Activated CD8-positive, alpha-beta T cell treated with anti-CD3 and anti-CD28 coated beads for 36 hours (primary cell): ENCODE measurements at regions of chr6 and their contacts with region 1.

Region 1: DNA sequence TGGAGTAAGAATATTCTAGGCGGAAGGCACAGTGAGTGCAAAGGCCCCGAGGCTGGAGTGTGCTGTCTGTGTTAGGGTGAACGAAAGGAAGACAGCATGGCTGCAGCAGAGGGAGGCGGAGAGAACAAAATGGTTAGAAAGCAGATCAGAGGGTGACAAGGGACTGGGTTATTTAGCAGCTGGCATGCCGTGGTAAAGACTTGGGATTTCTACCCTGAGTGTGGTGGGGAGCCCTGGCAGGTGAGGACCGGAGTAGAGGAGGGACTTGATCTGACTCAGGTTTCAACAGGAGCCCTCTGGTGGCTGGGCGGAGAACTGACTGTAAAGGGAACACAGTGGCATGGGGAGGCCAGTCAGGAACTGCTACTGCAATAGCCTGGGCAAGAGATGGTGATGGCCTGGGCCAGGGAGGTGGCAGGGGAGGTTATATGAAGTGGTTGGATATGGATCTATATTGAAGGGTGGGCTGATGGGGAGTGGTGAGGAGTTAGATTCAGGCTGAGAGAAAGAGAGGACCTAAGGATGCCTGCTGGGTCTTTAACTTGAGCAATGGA is 38.0 kb downstream of the PIM1 start:
- DNase-seq: peak; percentile 97
- ATAC-seq: peak; percentile 76
- H3K4me3 Mint-ChIP-seq: no peak overlapping the region
- H3K27ac Mint-ChIP-seq: peak overlapping the region; percentile 86
- H3K4me1 Mint-ChIP-seq: peaks cover 65% of the 10 kb centered on the region
- H3K27me3 Mint-ChIP-seq: no peaks in the 10 kb centered on the region
- CTCF ChIP-seq: peak; percentile 93

Region 2: DNA sequence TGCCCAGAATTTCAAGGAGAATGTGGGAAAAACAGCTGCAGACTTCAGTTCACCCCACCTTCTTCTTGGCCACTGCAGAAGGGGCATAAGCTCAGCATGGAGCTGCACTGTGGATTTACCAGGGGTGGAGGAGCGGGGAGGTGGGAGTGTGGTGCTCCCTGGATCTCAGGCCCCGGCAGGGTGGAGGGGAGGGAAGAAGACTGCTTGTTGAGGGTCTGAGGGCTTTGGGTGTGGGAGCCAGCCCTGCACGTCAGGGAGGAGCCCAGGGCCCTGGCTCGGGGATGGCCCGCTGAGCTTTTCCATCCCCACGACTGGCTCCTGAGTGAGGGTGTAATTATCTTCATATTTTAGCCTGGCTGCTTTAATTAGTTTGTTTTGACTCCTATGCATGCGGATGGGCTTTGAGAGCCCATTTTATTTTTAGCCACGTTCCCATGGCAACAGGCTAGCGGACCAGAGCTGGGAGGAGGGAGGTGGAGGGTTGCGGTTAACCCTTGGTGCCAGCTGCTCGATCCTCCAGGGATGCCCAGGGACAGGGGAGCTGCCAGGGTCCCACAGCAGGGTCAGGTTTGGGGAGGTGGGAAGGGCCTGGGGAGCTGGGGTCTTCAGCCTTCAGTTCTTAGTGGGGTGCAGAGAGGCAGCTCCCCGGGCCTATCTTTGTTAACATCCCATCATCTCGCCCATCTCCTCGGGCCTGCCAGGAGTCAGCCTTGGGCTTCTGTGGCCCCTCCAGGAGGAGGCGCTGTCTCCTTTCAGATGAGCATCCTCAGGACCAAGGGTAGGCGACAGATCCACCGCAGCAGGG is 442.2 kb before region 1 on chr6:
- CTCF ChIA-PET with region 1: interaction called, 5 read pairs
- POLR2A ChIA-PET with region 1: no interaction called
- intact Hi-C with region 1: loop called (anchors 10 kb)
- DNase-seq: peak; percentile 90
- ATAC-seq: peak; percentile 88
- H3K4me3 Mint-ChIP-seq: no peak overlapping the region
- H3K27ac Mint-ChIP-seq: no peak overlapping the region
- H3K4me1 Mint-ChIP-seq: peaks cover 31% of the 10 kb centered on the region
- H3K27me3 Mint-ChIP-seq: no peaks in the 10 kb centered on the region
- CTCF ChIP-seq: peak; percentile 87

Region 3: DNA sequence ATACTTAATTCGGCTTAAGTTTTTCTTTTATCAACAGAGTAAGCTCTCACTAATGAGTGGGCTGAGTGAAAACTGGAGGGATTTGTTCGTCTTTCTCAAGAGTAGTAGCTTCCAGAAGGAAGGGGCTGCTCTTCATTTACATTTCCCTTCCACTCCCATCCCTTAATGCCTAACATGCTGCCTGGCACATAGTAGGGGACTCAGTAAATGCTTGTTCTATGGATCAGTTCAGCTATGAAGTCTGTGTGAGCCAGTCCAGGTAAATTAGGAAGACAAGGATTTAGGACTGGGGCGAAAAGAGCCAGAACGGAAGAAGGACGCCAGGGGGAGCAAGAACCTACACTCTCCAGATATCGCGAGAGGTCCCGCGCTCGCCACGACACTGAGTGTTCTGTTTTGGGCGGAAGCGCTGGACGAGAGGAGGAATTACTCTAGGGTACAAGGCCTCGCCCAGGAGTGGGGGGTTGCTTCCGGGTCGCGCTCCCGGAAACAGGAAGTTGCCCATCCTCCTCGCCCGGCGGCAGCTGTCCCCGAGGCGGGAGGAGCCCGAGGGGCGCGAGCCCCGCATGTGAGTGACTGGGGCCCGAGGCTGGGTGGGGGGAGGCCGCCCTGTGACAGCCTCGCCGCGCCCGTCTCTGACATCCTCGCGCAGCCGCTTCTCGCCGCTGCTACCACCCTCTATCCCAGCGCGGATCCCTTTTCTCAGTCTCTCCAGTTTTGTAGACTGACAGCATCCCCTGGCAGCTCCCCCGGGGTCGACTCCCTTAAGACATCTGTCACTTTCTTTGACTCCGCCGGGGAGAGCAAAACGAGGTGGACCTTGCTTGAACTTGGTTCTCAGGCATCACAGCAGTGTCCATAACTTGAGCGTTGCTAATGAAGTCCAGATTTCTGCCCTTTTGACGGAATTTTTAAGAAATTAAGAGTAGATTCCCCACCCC is 322.2 kb before region 1 on chr6 and contains the start of gene C6orf89:
- CTCF ChIA-PET with region 1: interaction called, 9 read pairs
- POLR2A ChIA-PET with region 1: no interaction called
- intact Hi-C with region 1: loop called (anchors 10 kb)
- DNase-seq: peak; percentile 99
- ATAC-seq: peak; percentile 99
- H3K4me3 Mint-ChIP-seq: peak within 1 kb of the TSS; percentile 94
- H3K27ac Mint-ChIP-seq: peak within 1 kb of the TSS; percentile 96
- H3K4me1 Mint-ChIP-seq: peaks cover 35% of the 10 kb centered on the region
- H3K27me3 Mint-ChIP-seq: no peaks in the 10 kb centered on the region
- CTCF ChIP-seq: peak; percentile 79
- total RNA-seq, gene C6orf89: 24.7 to 29.8 TPM

Region 4: DNA sequence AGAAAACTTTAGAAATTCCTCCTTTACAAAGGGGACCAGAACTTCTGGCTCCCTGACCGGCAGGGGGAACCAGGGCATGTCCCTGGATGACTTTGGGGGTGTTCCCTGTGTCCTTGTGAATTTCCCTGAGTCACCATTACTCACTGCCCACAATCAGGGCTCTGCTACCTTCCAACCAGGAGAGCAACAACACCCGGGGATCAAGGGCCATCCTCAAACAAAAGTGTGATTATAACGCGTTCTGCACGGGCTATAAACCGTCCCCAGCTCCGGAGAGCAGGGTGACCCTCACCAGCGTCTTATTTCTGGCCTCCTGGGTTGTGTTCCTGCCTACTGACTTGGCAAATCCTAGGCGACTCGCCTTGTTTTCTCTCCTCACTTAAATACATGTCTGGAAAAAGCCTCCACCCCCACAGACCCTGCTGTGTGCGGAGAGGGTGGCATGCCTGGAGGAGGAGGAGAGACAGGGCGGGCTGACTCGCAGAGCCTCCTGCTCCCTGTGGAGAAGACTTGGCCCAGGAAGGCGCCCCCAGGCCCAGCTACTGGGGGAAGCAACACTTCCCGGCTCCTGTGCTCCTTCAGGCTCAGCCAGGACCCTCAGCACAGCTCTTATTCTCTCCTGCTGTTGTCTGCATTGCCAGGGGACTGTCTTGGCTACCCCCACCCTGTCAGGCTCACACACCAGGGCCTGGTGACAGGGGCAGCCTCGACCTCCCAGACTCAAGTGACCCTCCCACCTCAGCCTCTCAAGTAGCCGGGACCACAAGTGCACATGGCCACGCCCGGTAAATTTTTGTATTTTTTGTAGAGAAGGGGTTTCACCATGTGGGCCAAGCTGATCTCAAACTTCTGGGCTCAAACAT is 148.4 kb before region 1 on chr6:
- CTCF ChIA-PET with region 1: interaction called, 97 read pairs
- POLR2A ChIA-PET with region 1: no interaction called
- intact Hi-C with region 1: no loop called
- DNase-seq: peak; percentile 31
- ATAC-seq: peak; percentile 55
- H3K4me3 Mint-ChIP-seq: no peak overlapping the region
- H3K27ac Mint-ChIP-seq: no peak overlapping the region
- H3K4me1 Mint-ChIP-seq: peaks cover 7% of the 10 kb centered on the region
- H3K27me3 Mint-ChIP-seq: no peaks in the 10 kb centered on the region
- CTCF ChIP-seq: no peak

Region 5: DNA sequence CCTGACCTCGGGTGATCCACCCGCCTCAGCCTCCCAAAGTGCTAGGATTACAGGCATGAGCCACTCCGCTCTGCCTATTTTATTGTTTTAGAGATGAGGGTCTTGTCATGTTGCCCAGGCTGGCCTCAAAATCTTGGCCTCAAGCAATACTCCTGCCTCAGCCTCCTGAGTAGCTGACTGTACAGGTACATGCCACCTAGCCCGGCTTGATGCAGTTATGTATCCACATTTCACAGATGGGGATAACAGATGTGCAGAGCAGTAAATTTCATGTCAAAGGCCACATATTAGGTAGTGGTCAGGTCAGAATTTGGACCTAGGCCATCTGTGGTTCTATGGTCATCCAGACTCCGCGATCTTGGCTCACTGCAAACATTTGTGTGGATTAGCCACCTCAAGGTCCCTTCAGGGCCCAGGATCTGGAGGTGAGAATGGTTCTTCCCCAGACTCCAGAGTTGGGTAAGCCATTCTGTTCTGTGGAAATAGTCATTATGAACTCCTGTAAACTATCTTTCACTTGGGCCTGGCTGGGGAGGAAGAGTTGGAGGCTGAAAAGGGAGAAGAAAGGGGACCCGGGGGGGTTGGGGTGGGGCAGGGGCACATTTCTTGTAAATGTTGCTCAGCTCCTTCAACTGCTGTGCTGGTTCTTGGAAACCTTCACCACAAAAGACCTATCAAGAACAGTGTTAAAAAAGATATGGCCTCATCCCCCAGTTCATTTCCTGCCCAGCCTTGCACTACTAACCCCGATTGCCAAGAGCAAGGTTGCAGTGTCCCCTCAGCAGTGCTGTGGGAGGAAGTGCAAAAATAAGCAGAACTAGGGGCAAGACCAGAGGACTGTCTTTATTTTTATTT is 25.0 kb before region 1 on chr6:
- CTCF ChIA-PET with region 1: interaction called, 278 read pairs
- POLR2A ChIA-PET with region 1: interaction called, 222 read pairs
- intact Hi-C with region 1: no loop called
- DNase-seq: peak; percentile 88
- ATAC-seq: peak; percentile 94
- H3K4me3 Mint-ChIP-seq: peak overlapping the region; percentile 32
- H3K27ac Mint-ChIP-seq: peak overlapping the region; percentile 99
- H3K4me1 Mint-ChIP-seq: peaks cover 56% of the 10 kb centered on the region
- H3K27me3 Mint-ChIP-seq: no peaks in the 10 kb centered on the region
- CTCF ChIP-seq: no peak

Region 6: GRCh38 chr6:37222125-37222967 is 14.4 kb after region 1 on chr6:
- CTCF ChIA-PET with region 1: interaction called, 34 read pairs
- POLR2A ChIA-PET with region 1: no interaction called
- intact Hi-C with region 1: no loop called
- DNase-seq: peak; percentile 88
- ATAC-seq: peak; percentile 98
- H3K4me3 Mint-ChIP-seq: peak overlapping the region; percentile 68
- H3K27ac Mint-ChIP-seq: no peak overlapping the region
- H3K4me1 Mint-ChIP-seq: peaks cover 19% of the 10 kb centered on the region
- H3K27me3 Mint-ChIP-seq: no peaks in the 10 kb centered on the region
- CTCF ChIP-seq: no peak